Right ventricle myocardium superior (tissue), 1 donor: ENCODE measurements at regions of chr2 and their contacts with region 1.

Region 1: GRCh38 chr2:46645681-46646162 is 166.4 kb downstream of the TMEM247 start:
- DNase-seq: peak; percentile 57
- ATAC-seq: peak; percentile 60

Region 2: DNA sequence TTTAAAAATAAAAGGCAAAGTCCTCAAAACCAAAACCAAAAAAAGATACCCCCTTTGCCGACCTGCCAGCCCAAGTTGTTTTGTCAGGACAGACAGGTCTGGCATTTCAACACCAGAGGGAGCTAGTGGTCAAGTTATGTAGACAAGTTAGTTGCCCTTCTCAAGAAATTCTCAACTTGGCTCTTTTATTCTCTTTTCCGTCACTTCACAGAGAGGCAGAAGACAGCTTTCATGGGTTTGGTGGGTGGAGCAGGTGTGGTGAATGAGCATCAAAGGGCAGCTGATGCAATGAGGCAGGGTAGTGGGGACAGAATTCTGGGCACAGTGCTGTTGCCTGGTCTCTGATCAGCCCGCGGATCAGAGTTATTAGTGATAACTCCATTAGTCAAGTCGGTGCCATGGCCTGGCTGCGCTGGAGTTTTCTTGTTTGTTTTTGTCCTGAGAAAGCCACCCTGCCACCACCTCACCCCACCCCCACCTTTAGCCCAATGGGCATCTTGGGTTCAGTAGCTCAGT is 652.2 kb before region 1 on chr2:
- intact Hi-C with region 1: loop called (anchors 5 kb)
- DNase-seq: no peak
- ATAC-seq: peak; percentile 72